ENCODE measurements at regions of chr1 and their contacts with region 1.

Region 1: GRCh38 chr1:61851849-61852669 is 109.8 kb downstream of the PATJ start:
- DNase-seq: no peak
- H3K4me3 Mint-ChIP-seq: no peak overlapping the region
- H3K27ac Mint-ChIP-seq: no peak overlapping the region
- H3K4me1 Mint-ChIP-seq: no peaks in the 10 kb centered on the region
- H3K27me3 Mint-ChIP-seq: no peaks in the 10 kb centered on the region

Region 2: GRCh38 chr1:60848583-60849188 is 1003.4 kb before region 1 on chr1:
- intact Hi-C with region 1: loop called (anchors 5 kb)
- DNase-seq: no peak
- H3K4me3 Mint-ChIP-seq: no peak overlapping the region
- H3K27ac Mint-ChIP-seq: no peak overlapping the region
- H3K4me1 Mint-ChIP-seq: no peaks in the 10 kb centered on the region
- H3K27me3 Mint-ChIP-seq: peaks cover 9% of the 10 kb centered on the region

Region 3: DNA sequence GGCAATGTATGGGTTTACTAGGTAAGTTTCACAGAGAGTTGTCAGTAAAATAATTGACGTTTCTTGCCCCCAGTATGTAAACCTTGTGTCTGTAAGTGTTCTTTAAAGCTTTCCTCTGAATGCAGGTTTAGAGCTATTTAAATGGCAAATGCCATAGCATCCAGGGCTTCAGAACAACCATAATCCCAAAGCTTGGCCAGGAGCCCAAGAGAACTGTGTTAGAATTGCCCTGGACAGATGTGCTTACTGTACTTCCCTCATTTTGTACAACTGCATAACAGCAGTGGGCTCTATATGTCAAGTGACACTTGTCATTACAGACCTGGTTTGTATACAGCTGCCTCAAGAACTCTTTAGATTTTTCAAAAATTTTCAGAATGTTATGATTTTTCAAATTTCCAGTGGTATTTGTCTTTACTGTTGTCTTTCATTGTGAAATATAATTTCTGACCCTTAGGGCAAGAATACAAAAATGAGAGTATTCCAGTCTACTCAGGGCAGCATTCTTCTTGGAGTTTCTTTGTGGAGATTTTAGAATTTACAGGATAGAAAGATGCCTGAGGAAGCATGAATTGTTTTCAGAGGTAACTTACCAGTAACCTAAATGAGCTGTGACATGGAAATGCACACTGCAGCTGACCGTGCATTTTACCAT is 205.7 kb after region 1 on chr1:
- intact Hi-C with region 1: no loop called
- DNase-seq: no peak
- H3K4me3 Mint-ChIP-seq: no peak overlapping the region
- H3K27ac Mint-ChIP-seq: no peak overlapping the region
- H3K4me1 Mint-ChIP-seq: no peaks in the 10 kb centered on the region
- H3K27me3 Mint-ChIP-seq: no peaks in the 10 kb centered on the region